Calu3 (cell line): ENCODE measurements at regions of chr20 and their contacts with region 1.

Region 1: DNA sequence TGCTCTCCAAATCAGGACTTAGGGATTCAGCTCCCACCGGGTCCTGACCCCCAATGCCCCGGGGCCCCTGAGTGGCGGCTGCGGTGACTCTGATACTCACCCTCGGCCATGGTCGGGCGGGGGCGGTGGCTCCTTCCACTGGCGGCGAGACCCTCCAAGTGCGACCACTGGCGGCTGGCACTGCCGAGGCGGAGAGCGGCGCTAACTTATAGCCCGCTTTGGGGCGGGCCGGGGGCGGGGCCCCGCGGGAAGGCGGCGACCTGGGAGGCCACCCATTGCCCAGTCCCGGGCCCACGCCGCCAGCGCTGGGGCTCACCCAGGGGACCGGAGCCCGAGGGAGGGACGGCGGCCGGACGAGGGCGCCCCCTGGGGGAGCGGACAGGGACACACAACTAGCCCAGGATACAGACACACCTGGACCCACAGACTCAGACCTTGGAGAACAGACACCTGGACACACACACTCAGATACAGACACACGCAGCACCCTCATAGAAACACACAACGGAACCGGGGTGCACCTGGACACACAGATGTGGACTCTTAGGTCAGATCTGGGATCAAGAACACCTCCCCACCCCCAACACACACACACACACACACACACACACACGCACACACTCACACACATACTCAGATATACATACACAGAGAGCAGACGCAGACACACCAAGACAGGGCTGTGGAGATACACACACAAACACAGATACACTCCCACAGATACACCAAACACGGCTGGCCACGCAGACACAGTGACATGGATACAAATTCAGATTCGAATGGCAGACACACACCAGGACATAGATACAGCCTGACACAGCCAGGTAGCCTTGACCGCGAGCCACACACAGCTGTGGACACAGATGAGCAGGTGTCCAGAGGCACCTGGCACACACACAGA is at the start of gene TGM2:
- DNase-seq: peak; percentile 98
- H3K4me3 Mint-ChIP-seq: peak within 1 kb of the TSS; percentile 59
- H3K27ac Mint-ChIP-seq: peak within 1 kb of the TSS; percentile 37
- H3K4me1 Mint-ChIP-seq: peaks cover 70% of the 10 kb centered on the region
- H3K27me3 Mint-ChIP-seq: no peaks in the 10 kb centered on the region
- CTCF ChIP-seq: peak; percentile 97
- total RNA-seq, gene TGM2: 261 and 311 TPM in 2 replicates

Region 2: GRCh38 chr20:37490663-37491350 is 674.5 kb before region 1 on chr20:
- CTCF ChIA-PET with region 1: interaction called, 11 read pairs
- intact Hi-C with region 1: no loop called
- DNase-seq: no peak
- H3K4me3 Mint-ChIP-seq: no peak overlapping the region
- H3K27ac Mint-ChIP-seq: no peak overlapping the region
- H3K4me1 Mint-ChIP-seq: no peaks in the 10 kb centered on the region
- H3K27me3 Mint-ChIP-seq: peaks cover 48% of the 10 kb centered on the region
- CTCF ChIP-seq: no peak

Region 3: GRCh38 chr20:37986873-37987601 is 178.3 kb before region 1 on chr20:
- CTCF ChIA-PET with region 1: no interaction called
- intact Hi-C with region 1: no loop called
- DNase-seq: peak; percentile 37
- H3K4me3 Mint-ChIP-seq: no peak overlapping the region
- H3K27ac Mint-ChIP-seq: no peak overlapping the region
- H3K4me1 Mint-ChIP-seq: peaks cover 44% of the 10 kb centered on the region
- H3K27me3 Mint-ChIP-seq: no peaks in the 10 kb centered on the region
- CTCF ChIP-seq: no peak

Region 4: GRCh38 chr20:38073307-38074071 is 91.8 kb before region 1 on chr20:
- CTCF ChIA-PET with region 1: interaction called, 14 read pairs
- intact Hi-C with region 1: loop called (anchors 1 kb)
- DNase-seq: peak; percentile 77
- H3K4me3 Mint-ChIP-seq: no peak overlapping the region
- H3K27ac Mint-ChIP-seq: no peak overlapping the region
- H3K4me1 Mint-ChIP-seq: peaks cover 26% of the 10 kb centered on the region
- H3K27me3 Mint-ChIP-seq: no peaks in the 10 kb centered on the region
- CTCF ChIP-seq: peak; percentile 92

Region 5: GRCh38 chr20:38127011-38127621 is 38.2 kb before region 1 on chr20:
- CTCF ChIA-PET with region 1: interaction called, 6 read pairs
- intact Hi-C with region 1: loop called (anchors 5 kb)
- DNase-seq: peak; percentile 64
- H3K4me3 Mint-ChIP-seq: peak overlapping the region; percentile 13
- H3K27ac Mint-ChIP-seq: peak overlapping the region; percentile 40
- H3K4me1 Mint-ChIP-seq: peaks cover 55% of the 10 kb centered on the region
- H3K27me3 Mint-ChIP-seq: no peaks in the 10 kb centered on the region
- CTCF ChIP-seq: no peak

Region 6: GRCh38 chr20:38152621-38153231 is 12.6 kb before region 1 on chr20:
- CTCF ChIA-PET with region 1: interaction called, 16 read pairs
- intact Hi-C with region 1: no loop called
- DNase-seq: peak; percentile 98
- H3K4me3 Mint-ChIP-seq: peak overlapping the region; percentile 61
- H3K27ac Mint-ChIP-seq: peak overlapping the region; percentile 88
- H3K4me1 Mint-ChIP-seq: peaks cover 68% of the 10 kb centered on the region
- H3K27me3 Mint-ChIP-seq: no peaks in the 10 kb centered on the region
- CTCF ChIP-seq: no peak